Activated T-helper 1 cell treated with anti-CD3 and anti-CD28 coated beads, Interleukin-12 subunit alpha, Interleukin-12 subunit beta, Interleukin-2, Interleukin-4 antibody, amounts not matched to agents 30 ng/mL and 10 ng/mL and 1 ng/mL, durations not matched to agents 14 hours and 24 hours and 36 hours (primary cell): ENCODE measurements at regions of chr20 and their contacts with region 1.

Region 1: GRCh38 chr20:49534255-49534712 is 33.7 kb downstream of the PTGIS start:
- DNase-seq: peak; percentile 55
- H3K4me3 Mint-ChIP-seq: peak overlapping the region; percentile 29
- H3K27ac Mint-ChIP-seq: peak overlapping the region; percentile 90
- H3K4me1 Mint-ChIP-seq: peaks cover 23% of the 10 kb centered on the region
- H3K27me3 Mint-ChIP-seq: peaks cover 20% of the 10 kb centered on the region

Region 2: GRCh38 chr20:49338061-49338460 is 196.2 kb before region 1 on chr20:
- intact Hi-C with region 1: loop called (anchors 1 kb)
- DNase-seq: no peak
- H3K4me3 Mint-ChIP-seq: no peak overlapping the region
- H3K27ac Mint-ChIP-seq: no peak overlapping the region
- H3K4me1 Mint-ChIP-seq: no peaks in the 10 kb centered on the region
- H3K27me3 Mint-ChIP-seq: peaks cover 12% of the 10 kb centered on the region

Region 3: GRCh38 chr20:49484180-49485140 is 49.8 kb before region 1 on chr20:
- intact Hi-C with region 1: loop called (anchors 1 kb)
- DNase-seq: peak; percentile 67
- H3K4me3 Mint-ChIP-seq: peak overlapping the region; percentile 85
- H3K27ac Mint-ChIP-seq: peak overlapping the region; percentile 66
- H3K4me1 Mint-ChIP-seq: peaks cover 9% of the 10 kb centered on the region
- H3K27me3 Mint-ChIP-seq: peaks cover 48% of the 10 kb centered on the region

Region 4: GRCh38 chr20:49545572-49545971 is 11.3 kb after region 1 on chr20:
- intact Hi-C with region 1: no loop called
- DNase-seq: no peak
- H3K4me3 Mint-ChIP-seq: no peak overlapping the region
- H3K27ac Mint-ChIP-seq: peak overlapping the region; percentile 57
- H3K4me1 Mint-ChIP-seq: peaks cover 26% of the 10 kb centered on the region
- H3K27me3 Mint-ChIP-seq: peaks cover 2% of the 10 kb centered on the region

Region 5: GRCh38 chr20:49594143-49594930 is 60.1 kb after region 1 on chr20:
- intact Hi-C with region 1: loop called (anchors 1 kb)
- DNase-seq: peak; percentile 76
- H3K4me3 Mint-ChIP-seq: peak overlapping the region; percentile 81
- H3K27ac Mint-ChIP-seq: peak overlapping the region; percentile 99
- H3K4me1 Mint-ChIP-seq: peaks cover 90% of the 10 kb centered on the region
- H3K27me3 Mint-ChIP-seq: no peaks in the 10 kb centered on the region

Region 6: GRCh38 chr20:49677777-49678758 is 143.8 kb after region 1 on chr20:
- intact Hi-C with region 1: loop called (anchors 2 kb)
- DNase-seq: no peak
- H3K4me3 Mint-ChIP-seq: peak overlapping the region; percentile 15
- H3K27ac Mint-ChIP-seq: peak overlapping the region; percentile 76
- H3K4me1 Mint-ChIP-seq: peaks cover 85% of the 10 kb centered on the region
- H3K27me3 Mint-ChIP-seq: no peaks in the 10 kb centered on the region